Calu3 (cell line): ENCODE measurements at regions of chr5 and their contacts with region 1.

Region 1: GRCh38 chr5:157948738-157949410 is 89.9 kb upstream of the CLINT1 start:
- DNase-seq: peak; percentile 95
- H3K4me3 Mint-ChIP-seq: peak overlapping the region; percentile 20
- H3K27ac Mint-ChIP-seq: peak overlapping the region; percentile 58
- H3K4me1 Mint-ChIP-seq: peaks cover 17% of the 10 kb centered on the region
- H3K27me3 Mint-ChIP-seq: no peaks in the 10 kb centered on the region
- CTCF ChIP-seq: peak; percentile 79

Region 2: GRCh38 chr5:157761690-157762621 is 186.9 kb before region 1 on chr5:
- CTCF ChIA-PET with region 1: interaction called, 4 read pairs
- intact Hi-C with region 1: loop called (anchors 2 kb)
- DNase-seq: peak; percentile 62
- H3K4me3 Mint-ChIP-seq: no peak overlapping the region
- H3K27ac Mint-ChIP-seq: no peak overlapping the region
- H3K4me1 Mint-ChIP-seq: no peaks in the 10 kb centered on the region
- H3K27me3 Mint-ChIP-seq: no peaks in the 10 kb centered on the region
- CTCF ChIP-seq: peak; percentile 58

Region 3: GRCh38 chr5:157855404-157855994 is 93.4 kb before region 1 on chr5:
- CTCF ChIA-PET with region 1: interaction called, 17 read pairs
- intact Hi-C with region 1: loop called (anchors 1 kb)
- DNase-seq: peak; percentile 63
- H3K4me3 Mint-ChIP-seq: peak overlapping the region; percentile 76
- H3K27ac Mint-ChIP-seq: peak overlapping the region; percentile 31
- H3K4me1 Mint-ChIP-seq: peaks cover 42% of the 10 kb centered on the region
- H3K27me3 Mint-ChIP-seq: no peaks in the 10 kb centered on the region
- CTCF ChIP-seq: peak; percentile 60

Region 4: DNA sequence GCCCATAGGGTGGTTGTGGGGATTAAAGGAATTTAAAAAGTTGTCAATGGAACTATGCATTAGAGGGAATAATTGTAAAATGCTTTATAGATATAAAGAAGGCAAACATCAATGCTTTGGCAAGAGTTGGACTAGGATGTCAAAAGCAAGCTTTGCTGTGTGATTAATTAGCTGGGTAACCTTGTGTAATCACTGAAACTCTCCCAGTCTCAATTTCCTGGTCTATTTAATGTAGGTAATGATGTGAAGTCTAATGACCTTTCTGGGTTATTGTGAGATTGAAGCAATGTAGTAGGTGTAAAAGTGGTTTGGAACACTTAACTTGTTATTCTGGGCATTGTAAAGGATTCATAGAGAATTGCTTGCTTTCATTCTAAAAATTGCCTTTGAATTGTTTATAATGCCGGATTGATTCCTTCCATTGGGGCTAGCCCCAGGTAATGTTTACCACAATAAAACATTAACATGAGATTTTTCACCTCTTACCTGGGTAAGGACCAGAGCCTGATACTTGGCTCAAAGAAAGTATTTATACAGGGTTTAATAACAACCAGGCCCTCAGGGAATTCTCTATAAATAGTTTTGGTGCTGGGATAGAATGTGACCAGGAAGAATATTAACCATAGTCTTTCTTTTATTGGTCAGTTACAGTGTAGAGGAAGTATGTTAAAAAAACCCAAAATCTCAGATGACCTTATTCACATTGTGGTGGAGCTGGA is 59.9 kb before region 1 on chr5:
- CTCF ChIA-PET with region 1: interaction called, 4 read pairs
- intact Hi-C with region 1: loop called (anchors 2 kb)
- DNase-seq: peak; percentile 39
- H3K4me3 Mint-ChIP-seq: peak overlapping the region; percentile 47
- H3K27ac Mint-ChIP-seq: peak overlapping the region; percentile 79
- H3K4me1 Mint-ChIP-seq: peaks cover 49% of the 10 kb centered on the region
- H3K27me3 Mint-ChIP-seq: no peaks in the 10 kb centered on the region
- CTCF ChIP-seq: no peak

Region 5: GRCh38 chr5:157917899-157918809 is 30.7 kb before region 1 on chr5:
- CTCF ChIA-PET with region 1: interaction called, 4 read pairs
- intact Hi-C with region 1: loop called (anchors 2 kb)
- DNase-seq: peak; percentile 86
- H3K4me3 Mint-ChIP-seq: peak overlapping the region; percentile 60
- H3K27ac Mint-ChIP-seq: peak overlapping the region; percentile 92
- H3K4me1 Mint-ChIP-seq: peaks cover 70% of the 10 kb centered on the region
- H3K27me3 Mint-ChIP-seq: no peaks in the 10 kb centered on the region
- CTCF ChIP-seq: peak; percentile 61

Region 6: GRCh38 chr5:157924931-157925729 is 23.7 kb before region 1 on chr5:
- CTCF ChIA-PET with region 1: interaction called, 16 read pairs
- intact Hi-C with region 1: no loop called
- DNase-seq: peak; percentile 72
- H3K4me3 Mint-ChIP-seq: peak overlapping the region; percentile 53
- H3K27ac Mint-ChIP-seq: peak overlapping the region; percentile 97
- H3K4me1 Mint-ChIP-seq: peaks cover 52% of the 10 kb centered on the region
- H3K27me3 Mint-ChIP-seq: no peaks in the 10 kb centered on the region
- CTCF ChIP-seq: no peak

Region 7: GRCh38 chr5:157994906-157995519 is 46.1 kb after region 1 on chr5:
- CTCF ChIA-PET with region 1: interaction called, 9 read pairs
- intact Hi-C with region 1: loop called (anchors 1 kb)
- DNase-seq: peak; percentile 86
- H3K4me3 Mint-ChIP-seq: peak overlapping the region; percentile 47
- H3K27ac Mint-ChIP-seq: peak overlapping the region; percentile 7
- H3K4me1 Mint-ChIP-seq: peaks cover 21% of the 10 kb centered on the region
- H3K27me3 Mint-ChIP-seq: no peaks in the 10 kb centered on the region
- CTCF ChIP-seq: peak; percentile 70